ENCODE measurements at regions of chr6 and their contacts with region 1.

Region 1: DNA sequence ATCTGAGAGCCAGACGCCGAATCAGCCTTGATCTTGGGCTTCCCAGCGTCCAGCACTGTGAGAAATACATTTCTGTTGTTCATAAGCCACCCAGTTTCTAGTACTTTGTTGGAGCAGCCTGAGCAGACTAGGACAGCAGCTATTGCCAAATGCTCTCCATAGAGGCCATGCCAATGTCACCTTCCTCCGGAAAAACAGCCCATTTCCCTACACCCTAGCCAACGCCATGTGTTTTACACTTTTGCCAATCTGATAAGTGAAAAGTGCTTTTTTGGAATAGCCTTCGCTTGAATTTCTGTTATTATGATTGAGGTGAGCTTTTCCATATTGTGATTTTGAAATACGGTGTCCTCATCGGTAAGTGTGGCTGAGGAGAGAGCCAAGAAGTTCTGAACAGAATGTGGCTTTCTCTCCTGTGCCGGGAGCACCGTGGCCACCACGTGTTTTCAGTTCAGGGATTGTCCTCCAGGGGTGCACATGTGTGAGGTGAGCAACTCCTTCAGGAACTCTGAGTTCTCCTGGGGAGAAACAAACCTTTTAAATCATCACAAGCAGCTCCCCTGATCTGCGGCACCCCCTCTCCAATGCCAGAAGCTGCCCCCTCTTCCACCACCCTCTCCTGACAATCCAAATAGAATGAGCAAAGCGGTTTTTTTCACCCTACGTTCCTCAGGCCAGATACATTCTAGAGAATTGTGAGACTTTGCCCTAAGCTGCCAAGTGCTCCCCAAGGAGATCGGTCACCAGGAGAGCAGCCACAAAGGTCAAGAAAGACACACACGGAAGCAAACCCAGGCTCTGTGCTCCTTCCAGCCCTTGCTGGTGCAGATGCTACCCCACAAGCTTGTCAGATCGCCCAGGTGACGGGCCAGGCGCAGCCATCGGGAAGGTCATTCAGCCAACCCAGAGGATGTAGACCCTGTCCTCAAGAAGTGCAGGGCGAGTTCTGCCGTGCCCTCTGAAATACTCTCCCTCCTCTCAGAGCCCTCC is 36.0 kb downstream of the TAF8 start:
- DNase-seq: no peak
- H3K4me3 ChIP-seq: no peak overlapping the region
- H3K27ac ChIP-seq: no peak overlapping the region
- H3K4me1 ChIP-seq: peaks cover 0 to 6% (median 0%) of the 10 kb centered on the region in 4 experiments; a peak in 1 of 7 replicates
- H3K27me3 ChIP-seq: peaks cover 0 to 7% (median under 1%) of the 10 kb centered on the region in 4 experiments; a peak in 4 of 7 replicates
- CTCF ChIP-seq: peak; percentile 45 to 63 (median 45); a peak in 3 of 4 replicates
- EP300 ChIP-seq: no peak
- POLR2A ChIP-seq: no peak
- RAD21 ChIP-seq: peak; percentile 14 to 38; a peak in 3 of 4 replicates

Region 2: DNA sequence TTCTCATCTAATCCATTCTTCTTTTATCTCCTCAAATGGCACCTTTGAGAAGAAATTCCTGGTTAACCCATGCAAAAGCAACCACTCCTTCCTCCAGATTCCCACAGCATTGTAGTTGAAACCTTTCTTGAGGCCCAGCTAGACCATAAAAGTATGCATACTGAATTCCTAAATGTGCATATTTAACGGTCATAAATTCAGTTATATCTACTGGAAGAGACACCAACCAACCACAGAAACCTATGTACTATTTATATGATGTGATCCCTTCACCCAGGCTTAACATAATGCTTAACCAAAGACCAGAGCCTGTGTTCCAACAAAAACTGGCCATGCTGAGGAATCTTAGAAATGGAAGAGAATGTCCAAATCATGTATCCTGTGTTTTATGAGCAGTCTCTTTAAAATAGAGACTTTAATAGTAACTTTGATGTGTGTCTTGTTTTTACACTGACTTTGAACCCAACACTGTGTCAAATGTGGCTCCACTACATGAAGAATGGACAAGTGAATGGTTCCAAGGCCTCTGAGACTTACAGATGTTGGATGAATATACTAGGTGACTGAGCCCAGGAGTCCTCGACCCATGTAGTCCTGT is 47.4 kb before region 1 on chr6:
- CTCF ChIA-PET with region 1: no interaction called
- POLR2A ChIA-PET with region 1: no interaction called
- DNase-seq: no peak
- H3K4me3 ChIP-seq: no peak overlapping the region
- H3K27ac ChIP-seq: no peak overlapping the region
- H3K4me1 ChIP-seq: peaks cover 0 to 6% (median 2%) of the 10 kb centered on the region in 4 experiments; a peak in 5 of 7 replicates
- H3K27me3 ChIP-seq: peaks cover 0 to 12% (median 9%) of the 10 kb centered on the region in 4 experiments; a peak in 5 of 7 replicates
- CTCF ChIP-seq: no peak
- EP300 ChIP-seq: no peak
- POLR2A ChIP-seq: no peak
- RAD21 ChIP-seq: no peak

Region 3: GRCh38 chr6:42050266-42051032 is 35.9 kb before region 1 on chr6 and contains the start of gene TAF8:
- CTCF ChIA-PET with region 1: interaction called, 4 read pairs
- POLR2A ChIA-PET with region 1: interaction called, 11 read pairs
- DNase-seq: peak; percentile 79 to 91
- H3K4me3 ChIP-seq: peak within 1 kb of the TSS; percentile 85 to 99 (median 90)
- H3K27ac ChIP-seq: peak within 1 kb of the TSS; percentile 95
- H3K4me1 ChIP-seq: peaks cover 13 to 16% (median 14%) of the 10 kb centered on the region in 4 experiments
- H3K27me3 ChIP-seq: peaks cover 38 to 45% (median 42%) of the 10 kb centered on the region in 4 experiments
- CTCF ChIP-seq: no peak; a peak in 1 of 4 replicates
- EP300 ChIP-seq: no peak
- POLR2A ChIP-seq: peak in 1 of 2 experiments; percentile 100; a peak in 2 of 3 replicates
- RAD21 ChIP-seq: 0 out of 4 replicates have a peak, but pooled peaks of 1 of the 2 experiments have one; percentile 4
- total RNA-seq, gene TAF8: 32.7 and 34.0 TPM in 2 replicates

Region 4: GRCh38 chr6:42068872-42069523 is 17.3 kb before region 1 on chr6:
- CTCF ChIA-PET with region 1: interaction called, 313 read pairs
- POLR2A ChIA-PET with region 1: interaction called, 4 read pairs
- DNase-seq: no peak
- H3K4me3 ChIP-seq: no peak overlapping the region
- H3K27ac ChIP-seq: no peak overlapping the region
- H3K4me1 ChIP-seq: no peaks in the 10 kb centered on the region
- H3K27me3 ChIP-seq: no peaks in the 10 kb centered on the region
- CTCF ChIP-seq: peak in 2 of 3 experiments; percentile 18 to 32; a peak in 2 of 4 replicates
- EP300 ChIP-seq: no peak
- POLR2A ChIP-seq: no peak
- RAD21 ChIP-seq: peak in 1 of 2 experiments; percentile 18; a peak in 1 of 4 replicates

Region 5: DNA sequence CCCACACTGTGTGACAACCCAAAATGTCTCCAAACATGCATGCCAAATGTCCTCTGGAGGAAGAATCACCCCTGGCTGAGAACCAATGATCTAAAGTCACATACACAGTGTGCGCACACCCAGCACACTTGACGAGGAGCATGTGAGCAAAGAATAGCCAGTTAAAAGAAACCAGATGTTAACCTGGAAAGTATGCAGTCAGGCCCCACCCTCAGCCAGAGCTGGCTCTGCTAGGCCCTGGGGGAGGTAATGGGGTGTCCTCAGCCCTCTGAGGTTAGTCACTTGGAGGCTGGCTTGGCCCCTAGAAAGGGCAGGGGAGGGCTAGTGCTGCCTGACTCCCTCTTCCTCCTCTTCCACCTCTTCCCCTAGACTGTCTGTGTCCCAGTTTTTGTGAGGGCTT is 71.7 kb after region 1 on chr6:
- CTCF ChIA-PET with region 1: interaction called, 224 read pairs
- POLR2A ChIA-PET with region 1: interaction called, 4 read pairs
- DNase-seq: no peak
- H3K4me3 ChIP-seq: no peak overlapping the region
- H3K27ac ChIP-seq: no peak overlapping the region
- H3K4me1 ChIP-seq: peaks cover 0 to 14% (median 8%) of the 10 kb centered on the region in 4 experiments
- H3K27me3 ChIP-seq: peaks cover 0 to 3% (median 0%) of the 10 kb centered on the region in 4 experiments; a peak in 3 of 7 replicates
- CTCF ChIP-seq: no peak
- EP300 ChIP-seq: no peak
- POLR2A ChIP-seq: no peak
- RAD21 ChIP-seq: no peak